Mammary epithelial cell (primary cell): ENCODE measurements at regions of chr2 and their contacts with region 1.

Region 1: DNA sequence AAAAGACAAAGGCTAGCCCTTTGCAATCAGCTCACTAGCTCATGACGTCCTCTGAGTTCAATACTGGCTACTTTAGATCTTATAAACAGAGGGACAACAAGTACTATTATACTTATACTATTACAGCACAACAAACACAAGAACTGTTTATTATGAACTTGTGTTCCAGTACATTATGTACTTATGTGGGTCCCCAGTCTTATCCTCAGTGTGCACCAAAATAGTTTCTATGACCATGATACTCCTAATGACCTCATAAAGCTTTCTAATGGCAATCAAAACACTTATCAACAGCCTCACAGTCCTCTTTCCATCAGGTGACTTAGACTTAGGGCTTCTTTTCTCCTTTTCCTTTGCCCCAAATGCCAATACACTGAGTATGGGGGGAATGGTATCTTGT is 614.4 kb downstream of the CNTNAP5 start:
- DNase-seq: no peak
- H3K4me3 ChIP-seq: no peak overlapping the region
- H3K27ac ChIP-seq: no peak overlapping the region
- H3K4me1 ChIP-seq: no peaks in the 10 kb centered on the region
- H3K27me3 ChIP-seq: no peaks in the 10 kb centered on the region
- CTCF ChIP-seq: no peak

Region 2: DNA sequence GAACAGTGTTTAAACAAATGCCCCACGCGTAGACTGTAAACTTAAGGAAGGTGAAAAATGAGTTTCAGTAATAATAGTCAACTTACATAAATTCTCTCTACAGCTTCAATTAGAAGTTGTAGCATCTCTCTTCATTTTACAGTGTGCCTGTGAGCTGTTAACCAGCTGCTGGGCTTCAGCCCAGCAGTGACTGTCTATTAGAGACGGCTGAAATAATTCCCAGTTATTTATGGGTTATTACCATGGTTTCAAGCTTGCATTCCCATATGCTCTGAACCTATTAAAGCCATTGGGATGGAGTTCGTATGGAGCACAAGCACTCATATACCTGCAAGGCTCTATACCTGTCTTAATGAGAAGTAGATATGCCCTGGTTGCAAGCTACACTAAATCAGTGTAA is 113.3 kb before region 1 on chr2:
- CTCF ChIA-PET with region 1: no interaction called
- dilution Hi-C with region 1: no loop called
- in situ Hi-C with region 1: no loop called
- intact Hi-C with region 1: loop called (anchors 5 kb)
- DNase-seq: no peak
- H3K4me3 ChIP-seq: no peak overlapping the region
- H3K27ac ChIP-seq: no peak overlapping the region
- H3K4me1 ChIP-seq: no peaks in the 10 kb centered on the region
- H3K27me3 ChIP-seq: no peaks in the 10 kb centered on the region
- CTCF ChIP-seq: no peak

Region 3: DNA sequence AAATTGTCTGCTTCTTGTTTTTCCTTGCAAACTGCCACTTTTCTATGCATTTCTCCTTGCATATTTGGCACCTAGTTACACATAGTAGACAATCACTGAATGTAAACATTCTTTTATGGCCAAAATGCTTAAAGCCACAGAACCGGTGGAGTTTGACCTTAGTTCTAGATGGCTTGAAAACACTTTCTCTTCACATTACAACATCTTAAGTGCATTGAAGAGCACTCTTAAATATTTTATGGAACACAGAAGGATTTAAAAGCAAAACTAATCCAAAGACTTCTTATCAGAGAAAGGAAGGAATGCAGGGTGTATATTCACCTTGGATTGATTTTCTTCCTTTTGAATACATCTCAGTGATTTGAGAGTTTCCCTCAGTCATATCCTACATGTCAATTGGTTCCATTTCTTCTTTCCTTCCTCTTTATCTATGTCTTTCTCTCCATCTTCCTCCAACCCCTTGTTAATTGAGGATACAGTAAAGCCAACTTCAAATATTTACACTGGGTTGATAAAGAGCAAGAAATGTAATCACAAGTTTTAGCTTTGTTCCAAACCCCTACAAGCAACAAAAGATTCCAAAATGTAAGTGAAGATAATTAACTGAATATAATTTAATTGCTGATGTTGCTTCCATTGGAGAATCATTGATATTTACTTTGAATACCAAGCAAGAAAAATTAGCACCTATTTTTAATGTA is 66.4 kb before region 1 on chr2:
- CTCF ChIA-PET with region 1: no interaction called
- dilution Hi-C with region 1: no loop called
- in situ Hi-C with region 1: no loop called
- intact Hi-C with region 1: no loop called
- DNase-seq: no peak
- H3K4me3 ChIP-seq: no peak overlapping the region
- H3K27ac ChIP-seq: no peak overlapping the region
- H3K4me1 ChIP-seq: no peaks in the 10 kb centered on the region
- H3K27me3 ChIP-seq: no peaks in the 10 kb centered on the region
- CTCF ChIP-seq: no peak